K562 (cell line): ENCODE measurements at regions of chr10 and their contacts with region 1.

Region 1: DNA sequence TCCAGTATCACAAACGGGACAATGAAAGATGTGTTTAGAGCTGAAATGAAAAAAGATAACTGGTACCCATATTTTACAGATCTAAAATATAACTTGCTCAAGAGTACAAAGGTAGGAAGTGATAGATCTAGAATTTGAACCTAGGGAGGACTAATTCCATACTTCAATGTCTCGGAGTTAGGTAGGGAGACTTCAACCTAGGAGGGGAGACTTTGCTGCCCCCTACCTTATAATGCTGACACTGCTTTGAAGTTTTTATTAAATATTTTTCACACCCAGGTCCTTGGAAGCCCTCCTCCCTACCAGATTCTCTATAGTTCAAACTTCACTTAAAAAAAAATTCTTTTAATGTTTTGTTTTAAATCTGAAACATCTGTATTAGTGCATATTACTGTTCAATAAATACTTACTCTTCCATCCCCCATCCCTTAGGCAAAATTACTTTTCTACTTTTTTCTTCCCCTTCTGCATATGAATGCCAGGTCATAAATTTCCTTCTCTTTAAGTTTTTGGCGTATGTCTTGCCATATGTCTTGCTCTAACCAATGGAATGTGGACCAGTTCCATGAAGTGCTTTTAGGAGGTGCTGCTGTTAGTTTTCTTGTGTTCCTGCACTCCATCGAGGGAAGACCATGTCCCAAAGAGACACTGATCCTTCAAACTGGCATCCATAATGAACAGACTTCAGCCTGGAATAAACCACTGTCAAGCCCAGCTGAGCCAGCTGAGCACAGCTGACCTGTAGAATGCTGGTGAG is 57.8 kb downstream of the MICU1 start:
- DNase-seq: peak; percentile 41 to 64 (median 48)
- ATAC-seq: peak; percentile 95
- H3K4me3 ChIP-seq: no peak overlapping the region
- H3K27ac ChIP-seq: no peak overlapping the region
- H3K4me1 ChIP-seq: no peaks in the 10 kb centered on the region
- H3K27me3 ChIP-seq: no peaks in the 10 kb centered on the region
- CTCF ChIP-seq: peak; percentile 47 to 77 (median 67); a peak in 5 of 6 replicates
- EP300 ChIP-seq: no peak
- POLR2A ChIP-seq: no peak
- RAD21 ChIP-seq: peak; percentile 43 to 62; a peak in 3 of 4 replicates

Region 2: DNA sequence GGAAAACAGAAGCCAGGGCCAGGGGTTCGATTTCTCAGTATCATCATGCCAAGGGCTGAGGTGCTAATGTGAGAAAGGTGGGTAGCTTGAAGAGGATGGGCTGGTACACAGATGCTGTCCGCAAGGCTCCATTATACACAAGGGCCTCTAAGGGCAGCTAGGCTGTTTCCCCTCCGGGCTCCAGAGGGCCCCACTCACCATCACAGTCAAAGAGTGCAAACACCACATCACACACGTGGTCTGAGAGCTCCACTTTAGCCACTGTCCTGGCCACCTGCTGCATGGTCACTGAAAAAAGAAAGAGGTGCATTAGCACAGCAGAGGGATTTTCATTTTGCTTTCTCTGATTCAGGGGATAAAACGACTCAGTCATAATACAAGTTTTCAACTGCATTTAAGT is 192.5 kb before region 1 on chr10:
- CTCF ChIA-PET with region 1: no interaction called
- POLR2A ChIA-PET with region 1: no interaction called
- in situ Hi-C with region 1: no loop called
- intact Hi-C with region 1: loop called (anchors 5 kb)
- DNase-seq: peak in 3 of 4 experiments; percentile 45 to 64 (median 51)
- ATAC-seq: peak; percentile 98
- H3K4me3 ChIP-seq: no peak overlapping the region
- H3K27ac ChIP-seq: no peak overlapping the region
- H3K4me1 ChIP-seq: no peaks in the 10 kb centered on the region
- H3K27me3 ChIP-seq: no peaks in the 10 kb centered on the region
- CTCF ChIP-seq: peak; percentile 64 to 71 (median 71)
- EP300 ChIP-seq: no peak
- POLR2A ChIP-seq: no peak
- RAD21 ChIP-seq: peak; percentile 32 to 76

Region 3: GRCh38 chr10:72834183-72834825 is 266.2 kb after region 1 on chr10:
- CTCF ChIA-PET with region 1: no interaction called
- POLR2A ChIA-PET with region 1: no interaction called
- in situ Hi-C with region 1: no loop called
- intact Hi-C with region 1: loop called (anchors 10 kb)
- DNase-seq: peak; percentile 17 to 78 (median 40)
- ATAC-seq: peak; percentile 85
- H3K4me3 ChIP-seq: no peak overlapping the region
- H3K27ac ChIP-seq: no peak overlapping the region
- H3K4me1 ChIP-seq: peaks cover 5 to 8% of the 10 kb centered on the region in 2 experiments; a peak in 4 of 5 replicates
- H3K27me3 ChIP-seq: no peaks in the 10 kb centered on the region
- CTCF ChIP-seq: peak; percentile 69 to 92 (median 74)
- EP300 ChIP-seq: no peak
- POLR2A ChIP-seq: no peak
- RAD21 ChIP-seq: peak; percentile 93 to 97